ENCODE measurements at regions of chrX and their contacts with region 1.

Region 1: GRCh38 chrX:29911673-29912072 is 303.7 kb upstream of the MAGEB2 start:
- DNase-seq: no peak
- ATAC-seq: no peak
- H3K4me3 ChIP-seq: no peak overlapping the region
- H3K27ac ChIP-seq: no peak overlapping the region
- H3K4me1 ChIP-seq: no peaks in the 10 kb centered on the region
- H3K27me3 ChIP-seq: no peaks in the 10 kb centered on the region
- CTCF ChIP-seq: no peak
- EP300 ChIP-seq: no peak
- POLR2A ChIP-seq: no peak
- RAD21 ChIP-seq: no peak

Region 2: GRCh38 chrX:29024871-29025270 is 886.8 kb before region 1 on chrX:
- CTCF ChIA-PET with region 1: no interaction called
- POLR2A ChIA-PET with region 1: no interaction called
- in situ Hi-C with region 1: no loop called
- intact Hi-C with region 1: loop called (anchors 10 kb)
- DNase-seq: no peak
- ATAC-seq: no peak
- H3K4me3 ChIP-seq: no peak overlapping the region
- H3K27ac ChIP-seq: no peak overlapping the region
- H3K4me1 ChIP-seq: no peaks in the 10 kb centered on the region
- H3K27me3 ChIP-seq: no peaks in the 10 kb centered on the region
- CTCF ChIP-seq: no peak
- EP300 ChIP-seq: no peak
- POLR2A ChIP-seq: no peak
- RAD21 ChIP-seq: no peak

Region 3: GRCh38 chrX:29453333-29453732 is 458.3 kb before region 1 on chrX:
- CTCF ChIA-PET with region 1: no interaction called
- POLR2A ChIA-PET with region 1: no interaction called
- in situ Hi-C with region 1: no loop called
- intact Hi-C with region 1: no loop called
- DNase-seq: no peak
- ATAC-seq: no peak
- H3K4me3 ChIP-seq: no peak overlapping the region
- H3K27ac ChIP-seq: no peak overlapping the region
- H3K4me1 ChIP-seq: no peaks in the 10 kb centered on the region
- H3K27me3 ChIP-seq: no peaks in the 10 kb centered on the region
- CTCF ChIP-seq: no peak
- EP300 ChIP-seq: no peak
- POLR2A ChIP-seq: no peak
- RAD21 ChIP-seq: no peak

Region 4: DNA sequence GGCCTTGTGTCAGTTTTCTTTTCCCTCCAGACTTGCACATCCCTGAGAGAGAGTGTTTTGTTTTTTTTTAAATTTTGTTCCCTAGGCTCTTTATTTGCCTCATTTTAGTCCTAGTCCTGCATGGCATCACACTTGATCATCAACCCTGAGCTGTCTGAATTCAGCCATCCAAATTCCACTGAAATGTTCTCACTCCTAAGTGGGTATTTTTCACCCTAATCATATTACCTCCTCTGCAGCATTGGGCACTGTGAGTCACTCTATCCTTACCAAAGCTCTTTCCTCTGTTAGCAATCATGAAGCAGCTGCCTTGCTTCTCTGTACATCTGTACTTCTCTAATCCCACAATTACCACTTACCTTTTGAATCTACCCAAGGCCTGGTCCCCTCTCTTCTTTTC is 53.0 kb before region 1 on chrX:
- CTCF ChIA-PET with region 1: no interaction called
- POLR2A ChIA-PET with region 1: no interaction called
- in situ Hi-C with region 1: no loop called
- intact Hi-C with region 1: loop called (anchors 2 kb)
- DNase-seq: no peak
- ATAC-seq: no peak
- H3K4me3 ChIP-seq: no peak overlapping the region
- H3K27ac ChIP-seq: no peak overlapping the region
- H3K4me1 ChIP-seq: no peaks in the 10 kb centered on the region
- H3K27me3 ChIP-seq: no peaks in the 10 kb centered on the region
- CTCF ChIP-seq: no peak
- EP300 ChIP-seq: no peak
- POLR2A ChIP-seq: no peak
- RAD21 ChIP-seq: no peak

Region 5: DNA sequence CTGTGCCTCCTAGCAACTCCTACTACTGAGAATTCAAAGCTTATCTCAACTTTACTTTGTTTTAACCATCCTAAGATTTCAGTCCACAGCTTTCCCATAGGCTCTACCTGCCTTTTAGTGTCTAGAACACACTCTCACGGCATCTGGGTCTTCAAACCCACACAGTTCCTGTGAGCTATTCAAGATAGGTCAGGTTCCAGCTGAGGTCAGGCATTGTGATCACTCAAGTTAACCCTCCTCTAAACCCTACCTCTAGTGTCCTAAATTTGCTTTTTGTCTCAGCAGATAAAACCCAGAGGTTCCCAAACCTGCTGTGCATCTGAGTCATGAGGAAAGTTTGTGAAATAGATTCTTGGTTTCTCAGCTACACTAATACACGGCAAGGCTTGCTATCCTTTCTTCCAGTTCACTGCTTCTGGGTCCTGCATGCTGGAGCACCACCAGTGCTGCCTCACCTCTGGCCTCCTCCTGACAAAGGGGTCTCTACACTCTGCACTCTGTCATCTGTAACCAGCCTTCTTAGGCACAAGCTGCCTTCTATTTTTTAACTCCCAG is 20.9 kb before region 1 on chrX:
- CTCF ChIA-PET with region 1: no interaction called
- POLR2A ChIA-PET with region 1: no interaction called
- in situ Hi-C with region 1: no loop called
- intact Hi-C with region 1: no loop called
- DNase-seq: no peak
- ATAC-seq: no peak
- H3K4me3 ChIP-seq: no peak overlapping the region
- H3K27ac ChIP-seq: no peak overlapping the region
- H3K4me1 ChIP-seq: no peaks in the 10 kb centered on the region
- H3K27me3 ChIP-seq: no peaks in the 10 kb centered on the region
- CTCF ChIP-seq: no peak
- EP300 ChIP-seq: no peak
- POLR2A ChIP-seq: no peak
- RAD21 ChIP-seq: no peak

Region 6: DNA sequence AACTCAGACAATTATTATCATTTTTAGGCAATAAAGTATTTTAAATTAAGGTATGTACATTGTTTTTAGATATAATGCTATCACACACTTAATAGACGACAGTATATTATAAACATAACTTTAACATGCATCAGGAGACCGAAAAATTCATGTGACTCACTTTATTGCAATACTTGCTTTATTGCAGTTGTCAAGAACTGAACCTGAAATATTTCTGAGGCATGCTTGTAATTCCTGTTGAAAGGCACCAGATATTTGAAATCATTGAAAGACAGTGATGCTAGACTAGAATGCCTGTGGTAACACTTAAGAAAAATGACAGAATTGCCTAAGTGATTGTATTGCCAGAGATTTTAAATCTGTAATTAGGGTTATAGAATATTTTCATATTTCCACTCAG is 128.1 kb after region 1 on chrX:
- CTCF ChIA-PET with region 1: no interaction called
- POLR2A ChIA-PET with region 1: no interaction called
- in situ Hi-C with region 1: no loop called
- intact Hi-C with region 1: no loop called
- DNase-seq: no peak
- ATAC-seq: no peak
- H3K4me3 ChIP-seq: no peak overlapping the region
- H3K27ac ChIP-seq: no peak overlapping the region
- H3K4me1 ChIP-seq: no peaks in the 10 kb centered on the region
- H3K27me3 ChIP-seq: no peaks in the 10 kb centered on the region
- CTCF ChIP-seq: no peak
- EP300 ChIP-seq: no peak
- POLR2A ChIP-seq: no peak
- RAD21 ChIP-seq: no peak

Measured in HepG2 (cell line).